ENCODE measurements at regions of chr11 and their contacts with region 1.

Region 1: GRCh38 chr11:107689317-107690202 is 22.3 kb downstream of the SLN start:
- DNase-seq: peak; percentile 73
- ATAC-seq: peak; percentile 95
- H3K4me3 Mint-ChIP-seq: no peak overlapping the region
- H3K27ac Mint-ChIP-seq: no peak overlapping the region
- H3K4me1 Mint-ChIP-seq: no peaks in the 10 kb centered on the region
- H3K27me3 Mint-ChIP-seq: no peaks in the 10 kb centered on the region; the same call in 1 of the 2 replicates
- CTCF ChIP-seq: peak; percentile 54

Region 2: DNA sequence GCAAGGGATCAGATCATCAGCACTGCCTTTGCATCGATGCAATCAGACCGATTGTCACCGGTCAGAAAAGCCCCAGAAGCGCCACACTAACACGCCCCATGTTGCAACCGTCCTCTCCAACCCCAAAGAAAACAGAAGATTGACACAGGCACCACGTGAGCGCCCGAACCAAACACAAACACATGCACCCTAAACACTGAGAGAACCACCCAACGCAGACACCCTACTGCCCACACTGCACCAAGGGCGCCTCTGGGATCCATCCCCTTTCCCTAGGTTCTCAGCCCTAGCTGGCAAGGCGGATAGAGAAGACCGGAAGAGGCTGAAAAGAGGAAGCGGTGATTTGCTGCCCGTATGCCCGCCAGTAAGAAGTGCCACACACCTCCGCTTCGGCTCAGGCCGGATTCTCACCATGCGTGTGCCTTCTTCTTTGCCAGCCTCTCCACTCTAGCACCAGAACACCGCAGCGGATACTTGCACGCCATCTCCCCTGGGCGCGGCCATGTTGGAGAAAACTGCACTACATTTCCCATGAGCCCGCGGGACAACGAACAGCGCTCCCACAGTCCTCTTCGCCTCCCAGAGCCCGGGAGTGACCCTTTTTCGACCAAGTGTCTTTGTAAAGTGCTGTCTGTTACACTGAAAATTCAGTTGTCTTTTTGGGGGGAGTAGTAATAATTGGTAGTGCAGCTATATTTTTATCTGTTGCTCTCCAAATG is 124.2 kb before region 1 on chr11 and contains the start of gene ALKBH8:
- CTCF ChIA-PET with region 1: interaction called, 38 read pairs
- POLR2A ChIA-PET with region 1: interaction called, 3 read pairs
- DNase-seq: peak; percentile 73
- ATAC-seq: peak; percentile 92
- H3K4me3 Mint-ChIP-seq: peak within 1 kb of the TSS; percentile 99
- H3K27ac Mint-ChIP-seq: peak within 1 kb of the TSS; percentile 97
- H3K4me1 Mint-ChIP-seq: peaks cover 28% of the 10 kb centered on the region
- H3K27me3 Mint-ChIP-seq: no peaks in the 10 kb centered on the region
- CTCF ChIP-seq: no peak
- total RNA-seq, gene ALKBH8: 6.7 to 9.5 TPM (median 7.3 TPM) in 3 replicates

Region 3: DNA sequence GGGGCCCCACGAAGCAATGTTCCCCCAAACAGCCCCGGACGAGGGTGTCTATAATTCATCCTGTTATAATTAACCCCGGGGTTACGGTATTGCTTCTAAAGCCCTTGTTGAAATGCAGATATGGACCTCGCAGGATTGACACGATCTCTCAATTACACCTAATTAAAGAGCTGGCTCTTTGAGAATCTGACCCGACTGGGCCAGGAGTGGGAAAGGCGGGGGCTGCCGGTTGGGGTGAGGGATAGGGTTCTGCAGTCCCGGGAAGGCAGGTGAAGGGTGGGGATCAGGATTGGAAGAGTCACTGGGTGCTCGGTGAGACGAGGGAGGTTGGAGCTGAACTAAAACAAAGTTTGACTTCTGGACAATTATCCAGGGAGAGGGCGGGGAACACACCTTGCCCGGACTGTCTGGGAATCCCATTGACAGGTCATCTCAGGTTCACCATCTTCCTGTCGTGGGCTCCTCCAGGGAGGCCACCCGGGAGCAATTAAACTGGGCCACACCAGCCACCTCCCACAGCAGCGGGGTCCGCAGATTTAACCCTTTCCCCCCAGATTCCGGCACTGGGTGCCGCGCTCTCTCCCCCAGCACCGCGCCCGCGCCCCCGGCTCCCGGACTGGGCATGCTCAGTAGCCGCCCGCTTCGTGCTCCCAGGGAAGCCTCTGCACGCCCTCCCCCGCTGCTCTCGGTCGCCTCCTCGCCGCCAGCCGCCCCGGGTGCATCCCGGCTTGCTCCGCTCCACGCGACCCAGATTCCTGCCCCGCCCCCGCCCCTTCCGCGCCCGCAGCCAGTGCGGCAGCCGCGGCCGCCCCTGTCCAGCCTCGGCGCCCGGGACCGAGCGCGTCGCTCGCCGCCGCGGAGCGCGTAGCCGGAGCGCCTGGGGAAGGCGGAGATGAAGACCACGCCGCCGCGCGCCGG is 98.8 kb before region 1 on chr11 and contains the start of gene ELMOD1:
- CTCF ChIA-PET with region 1: interaction called, 16 read pairs
- POLR2A ChIA-PET with region 1: no interaction called
- DNase-seq: peak; percentile 67
- ATAC-seq: peak; percentile 51
- H3K4me3 Mint-ChIP-seq: peak within 1 kb of the TSS; percentile 95
- H3K27ac Mint-ChIP-seq: no peak within 1 kb of the TSS
- H3K4me1 Mint-ChIP-seq: peaks cover 43% of the 10 kb centered on the region
- H3K27me3 Mint-ChIP-seq: peaks cover 72% of the 10 kb centered on the region
- CTCF ChIP-seq: no peak
- total RNA-seq, gene ELMOD1: 0.98 to 2.3 TPM (median 1.4 TPM) in 3 replicates

Region 4: GRCh38 chr11:107606141-107606540 is 83.4 kb before region 1 on chr11:
- CTCF ChIA-PET with region 1: interaction called, 20 read pairs
- POLR2A ChIA-PET with region 1: no interaction called
- DNase-seq: peak; percentile 30
- ATAC-seq: peak; percentile 66
- H3K4me3 Mint-ChIP-seq: no peak overlapping the region
- H3K27ac Mint-ChIP-seq: peak overlapping the region; percentile 10
- H3K4me1 Mint-ChIP-seq: peaks cover 56% of the 10 kb centered on the region
- H3K27me3 Mint-ChIP-seq: peaks cover 6% of the 10 kb centered on the region; the same call in 1 of the 2 replicates
- CTCF ChIP-seq: no peak

Region 5: DNA sequence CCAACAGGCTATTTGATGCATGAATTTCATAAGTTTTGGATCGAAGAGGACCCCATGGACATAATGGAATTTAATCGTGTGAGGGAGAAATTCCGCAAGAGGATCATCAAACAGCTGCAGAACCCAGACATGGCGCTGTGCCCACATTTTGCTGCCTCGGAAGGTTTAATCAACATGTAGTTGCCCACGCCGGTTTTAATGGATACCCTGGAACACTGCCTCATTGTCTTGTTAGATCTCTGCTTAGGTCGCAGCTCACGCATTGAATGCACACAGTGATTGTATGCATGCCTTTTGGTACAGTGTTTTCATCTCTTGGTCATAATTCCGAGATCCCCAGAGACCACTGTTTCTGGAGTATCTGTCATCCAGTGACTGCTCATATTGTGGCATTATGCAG is 24.5 kb before region 1 on chr11:
- CTCF ChIA-PET with region 1: interaction called, 12 read pairs
- POLR2A ChIA-PET with region 1: no interaction called
- DNase-seq: no peak
- ATAC-seq: no peak
- H3K4me3 Mint-ChIP-seq: no peak overlapping the region
- H3K27ac Mint-ChIP-seq: no peak overlapping the region
- H3K4me1 Mint-ChIP-seq: peaks cover 28% of the 10 kb centered on the region
- H3K27me3 Mint-ChIP-seq: no peaks in the 10 kb centered on the region; the same call in 1 of the 2 replicates
- CTCF ChIP-seq: no peak

Region 6: GRCh38 chr11:107731941-107732688 is 42.6 kb after region 1 on chr11:
- CTCF ChIA-PET with region 1: no interaction called
- POLR2A ChIA-PET with region 1: no interaction called
- DNase-seq: no peak
- ATAC-seq: no peak
- H3K4me3 Mint-ChIP-seq: no peak overlapping the region
- H3K27ac Mint-ChIP-seq: no peak overlapping the region
- H3K4me1 Mint-ChIP-seq: no peaks in the 10 kb centered on the region
- H3K27me3 Mint-ChIP-seq: peaks cover 12% of the 10 kb centered on the region
- CTCF ChIP-seq: no peak

Measured in WTC11 (cell line).